GM12878 (cell line): ENCODE measurements at regions of chr9 and their contacts with region 1.

Region 1: GRCh38 chr9:12719431-12719830 is 26.2 kb downstream of the TYRP1 start:
- DNase-seq: no peak
- ATAC-seq: 0 out of 3 replicates have a peak, but pooled peaks have one; percentile 35
- H3K4me3 ChIP-seq: no peak overlapping the region
- H3K27ac ChIP-seq: no peak overlapping the region
- H3K4me1 ChIP-seq: no peaks in the 10 kb centered on the region
- H3K27me3 ChIP-seq: no peaks in the 10 kb centered on the region
- CTCF ChIP-seq: peak in 1 of 3 experiments; percentile 45; a peak in 1 of 6 replicates
- EP300 ChIP-seq: no peak
- POLR2A ChIP-seq: no peak
- RAD21 ChIP-seq: peak; percentile 49

Region 2: DNA sequence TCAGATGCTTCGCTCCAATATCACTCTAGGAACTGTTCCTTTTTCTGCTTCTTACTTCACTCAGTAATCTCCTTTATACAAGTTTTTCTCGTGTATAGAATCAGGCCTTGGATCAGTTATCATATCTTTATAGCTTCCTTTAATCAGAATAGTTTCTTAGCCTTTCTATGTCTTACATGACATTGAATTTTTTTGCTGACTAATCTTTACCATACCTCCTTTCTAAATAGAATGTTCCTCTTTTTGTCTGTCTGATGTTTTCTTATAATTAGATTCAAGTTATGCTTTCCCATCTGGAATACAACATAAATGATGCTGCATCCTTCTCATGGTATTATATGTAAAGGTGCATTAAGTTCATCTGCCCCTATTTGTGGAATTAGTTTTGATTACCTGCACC is 66.5 kb before region 1 on chr9:
- CTCF ChIA-PET with region 1: no interaction called
- POLR2A ChIA-PET with region 1: no interaction called
- RAD21 ChIA-PET with region 1: no interaction called
- SMC1A ChIA-PET with region 1: no interaction called
- in situ Hi-C with region 1: no loop called
- intact Hi-C with region 1: no loop called
- DNase-seq: no peak
- ATAC-seq: no peak
- H3K4me3 ChIP-seq: no peak overlapping the region
- H3K27ac ChIP-seq: no peak overlapping the region
- H3K4me1 ChIP-seq: no peaks in the 10 kb centered on the region
- H3K27me3 ChIP-seq: no peaks in the 10 kb centered on the region
- CTCF ChIP-seq: no peak
- EP300 ChIP-seq: no peak
- POLR2A ChIP-seq: no peak
- RAD21 ChIP-seq: no peak

Region 3: GRCh38 chr9:12739014-12739652 is 19.7 kb after region 1 on chr9:
- CTCF ChIA-PET with region 1: interaction called, 27 read pairs
- POLR2A ChIA-PET with region 1: no interaction called
- RAD21 ChIA-PET with region 1: interaction called, 12 read pairs
- SMC1A ChIA-PET with region 1: interaction called, 8 read pairs
- in situ Hi-C with region 1: no loop called
- intact Hi-C with region 1: no loop called
- DNase-seq: no peak
- ATAC-seq: no peak
- H3K4me3 ChIP-seq: no peak overlapping the region
- H3K27ac ChIP-seq: no peak overlapping the region
- H3K4me1 ChIP-seq: no peaks in the 10 kb centered on the region
- H3K27me3 ChIP-seq: no peaks in the 10 kb centered on the region
- CTCF ChIP-seq: no peak
- EP300 ChIP-seq: no peak
- POLR2A ChIP-seq: no peak
- RAD21 ChIP-seq: no peak

Region 4: GRCh38 chr9:12819436-12820185 is 100.2 kb after region 1 on chr9:
- CTCF ChIA-PET with region 1: interaction called, 37 read pairs
- POLR2A ChIA-PET with region 1: no interaction called
- RAD21 ChIA-PET with region 1: interaction called, 5 read pairs
- SMC1A ChIA-PET with region 1: interaction called, 38 read pairs
- in situ Hi-C with region 1: loop called (anchors 5 kb)
- intact Hi-C with region 1: loop called (anchors 1 kb)
- DNase-seq: no peak
- ATAC-seq: peak; percentile 88
- H3K4me3 ChIP-seq: no peak overlapping the region
- H3K27ac ChIP-seq: no peak overlapping the region
- H3K4me1 ChIP-seq: no peaks in the 10 kb centered on the region
- H3K27me3 ChIP-seq: no peaks in the 10 kb centered on the region
- CTCF ChIP-seq: peak; percentile 45 to 68 (median 55)
- EP300 ChIP-seq: no peak
- POLR2A ChIP-seq: no peak
- RAD21 ChIP-seq: peak; percentile 47; the same call in 1 of the 2 replicates

Region 5: DNA sequence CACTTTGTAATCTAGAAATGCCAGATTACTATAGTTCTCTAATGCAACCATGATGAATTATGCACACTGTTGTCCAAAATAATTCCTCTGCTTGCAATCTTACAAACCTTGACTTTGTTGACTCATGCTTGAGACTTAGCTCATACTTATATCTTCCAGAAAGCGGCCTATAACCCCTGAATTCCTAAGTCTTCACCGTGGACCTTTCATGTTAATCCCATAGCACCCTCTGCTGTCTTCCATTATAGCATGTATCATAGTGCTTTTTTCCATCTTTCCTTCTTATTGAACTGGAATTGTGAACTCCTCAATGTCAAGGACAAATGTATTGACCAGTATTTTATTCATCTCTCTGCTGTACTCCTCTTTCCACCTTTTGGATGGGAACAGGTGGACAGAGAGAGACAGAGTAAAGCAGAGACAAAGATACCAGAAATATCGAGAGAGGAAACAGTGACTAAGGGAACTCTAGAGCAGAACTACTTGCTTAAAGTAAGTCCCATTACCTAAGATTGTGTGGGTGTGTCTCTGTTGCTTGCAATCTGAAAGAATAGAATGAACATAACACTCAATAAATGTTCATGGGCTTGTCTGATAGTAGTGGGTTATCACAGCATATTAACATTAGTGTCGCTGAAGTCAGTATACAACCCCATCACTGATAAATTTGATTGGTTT is 165.4 kb after region 1 on chr9:
- CTCF ChIA-PET with region 1: interaction called, 12 read pairs
- POLR2A ChIA-PET with region 1: no interaction called
- RAD21 ChIA-PET with region 1: interaction called, 11 read pairs
- SMC1A ChIA-PET with region 1: interaction called, 6 read pairs
- in situ Hi-C with region 1: no loop called
- intact Hi-C with region 1: loop called (anchors 2 kb)
- DNase-seq: no peak
- ATAC-seq: peak; percentile 38; the same call in 2 of the 3 replicates
- H3K4me3 ChIP-seq: no peak overlapping the region
- H3K27ac ChIP-seq: no peak overlapping the region
- H3K4me1 ChIP-seq: no peaks in the 10 kb centered on the region
- H3K27me3 ChIP-seq: no peaks in the 10 kb centered on the region
- CTCF ChIP-seq: peak in 2 of 3 experiments; percentile 6 to 40; a peak in 3 of 6 replicates
- EP300 ChIP-seq: no peak
- POLR2A ChIP-seq: no peak
- RAD21 ChIP-seq: peak; percentile 39; the same call in 1 of the 2 replicates

Region 6: DNA sequence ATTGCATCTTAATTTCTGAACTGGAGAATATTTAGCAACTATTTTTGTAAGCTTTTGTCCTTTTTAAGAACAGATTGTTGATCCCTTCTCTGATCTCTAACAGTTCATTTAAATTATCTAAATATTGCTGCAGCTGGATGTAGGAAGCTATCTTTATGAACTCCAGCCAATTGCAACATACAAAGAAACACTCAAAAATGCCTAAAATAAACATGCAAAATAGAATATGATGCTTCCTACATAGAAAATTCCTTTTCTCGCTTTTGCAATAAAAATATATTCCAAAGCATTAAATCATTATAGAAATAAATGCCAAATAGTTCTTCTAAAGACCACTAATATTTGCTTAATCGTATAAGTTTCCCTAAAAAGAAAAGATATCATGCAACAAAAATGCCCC is 274.0 kb after region 1 on chr9:
- CTCF ChIA-PET with region 1: no interaction called
- POLR2A ChIA-PET with region 1: no interaction called
- RAD21 ChIA-PET with region 1: no interaction called
- SMC1A ChIA-PET with region 1: no interaction called
- in situ Hi-C with region 1: no loop called
- intact Hi-C with region 1: loop called (anchors 10 kb)
- DNase-seq: no peak
- ATAC-seq: no peak
- H3K4me3 ChIP-seq: no peak overlapping the region
- H3K27ac ChIP-seq: no peak overlapping the region
- H3K4me1 ChIP-seq: no peaks in the 10 kb centered on the region
- H3K27me3 ChIP-seq: no peaks in the 10 kb centered on the region
- CTCF ChIP-seq: no peak
- EP300 ChIP-seq: no peak
- POLR2A ChIP-seq: no peak
- RAD21 ChIP-seq: no peak

Region 7: GRCh38 chr9:13088720-13089427 is 369.4 kb after region 1 on chr9:
- CTCF ChIA-PET with region 1: interaction called, 72 read pairs
- POLR2A ChIA-PET with region 1: no interaction called
- RAD21 ChIA-PET with region 1: interaction called, 21 read pairs
- SMC1A ChIA-PET with region 1: interaction called, 12 read pairs
- in situ Hi-C with region 1: loop called (anchors 5 kb)
- intact Hi-C with region 1: loop called (anchors 2 kb)
- DNase-seq: no peak
- ATAC-seq: peak; percentile 77
- H3K4me3 ChIP-seq: no peak overlapping the region
- H3K27ac ChIP-seq: no peak overlapping the region
- H3K4me1 ChIP-seq: no peaks in the 10 kb centered on the region
- H3K27me3 ChIP-seq: no peaks in the 10 kb centered on the region
- CTCF ChIP-seq: peak; percentile 46 to 74 (median 62)
- EP300 ChIP-seq: no peak
- POLR2A ChIP-seq: no peak
- RAD21 ChIP-seq: peak; percentile 58